ENCODE measurements at regions of chr1 and their contacts with region 1.

Region 1: DNA sequence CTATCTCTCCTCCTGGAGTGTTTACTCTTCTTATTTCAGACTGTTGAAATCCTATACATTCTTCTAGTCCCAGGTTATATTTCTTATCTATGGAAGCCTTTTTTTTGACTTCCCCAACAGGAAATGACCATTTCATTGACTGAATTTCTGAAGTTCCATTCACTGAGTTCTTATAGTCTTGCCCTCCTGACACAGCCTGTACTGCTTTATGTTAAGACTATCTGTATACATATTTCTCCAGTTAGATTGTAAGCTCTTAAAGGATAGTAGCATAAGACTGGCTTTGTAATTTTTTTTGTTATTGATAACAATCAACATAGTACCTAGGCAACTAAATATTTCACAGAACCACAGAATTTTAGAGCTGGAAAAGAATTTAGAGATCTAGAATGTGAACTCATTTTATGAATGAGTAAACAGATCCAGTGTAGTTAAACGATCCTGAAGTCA is 14.9 kb upstream of the MACF1 start:
- DNase-seq: no peak
- ATAC-seq: no peak
- H3K4me3 ChIP-seq: no peak overlapping the region
- H3K27ac ChIP-seq: peak overlapping the region in 2 of 4 donors; percentile 18 to 31
- H3K4me1 ChIP-seq: peaks cover 31 to 34% of the 10 kb centered on the region in 2 donors
- H3K27me3 ChIP-seq: no peaks in the 10 kb centered on the region
- CTCF ChIP-seq: no peak
- POLR2A ChIP-seq: no peak

Region 2: DNA sequence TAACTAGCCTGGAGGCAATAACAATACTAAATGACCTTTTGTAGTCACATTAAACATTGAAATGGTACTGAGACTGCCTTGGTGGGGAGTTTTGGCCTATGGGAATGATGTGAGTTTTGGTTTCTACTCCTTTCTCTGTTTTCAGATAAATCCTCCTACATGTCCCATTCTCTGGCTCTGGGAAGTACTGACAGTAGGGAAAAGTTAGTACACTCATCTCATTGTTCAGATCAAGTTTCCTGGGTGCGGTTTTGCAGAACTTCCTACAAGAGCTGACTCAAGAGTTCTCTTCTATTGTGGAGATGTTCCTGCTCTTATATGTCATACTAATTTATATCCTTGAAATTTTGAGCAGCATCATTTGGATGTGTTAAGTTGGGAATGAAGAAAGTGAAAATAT is 59.3 kb before region 1 on chr1:
- in situ Hi-C with region 1: no loop called
- intact Hi-C with region 1: loop called (anchors 2 kb)
- DNase-seq: no peak
- ATAC-seq: peak; percentile 76 to 80
- H3K4me3 ChIP-seq: no peak overlapping the region
- H3K27ac ChIP-seq: peak overlapping the region; percentile 32 to 71 (median 66)
- H3K4me1 ChIP-seq: peaks cover 61 to 71% of the 10 kb centered on the region in 2 donors
- H3K27me3 ChIP-seq: no peaks in the 10 kb centered on the region
- CTCF ChIP-seq: no peak
- POLR2A ChIP-seq: no peak